T-cell (primary cell): ENCODE measurements at regions of chr5 and their contacts with region 1.

Region 1: GRCh38 chr5:66882592-66883227 is 286.5 kb downstream of the MAST4 start:
- DNase-seq: no peak
- ATAC-seq: no peak
- H3K4me3 ChIP-seq: no peak overlapping the region
- H3K4me3 Mint-ChIP-seq: no peak overlapping the region
- H3K27ac ChIP-seq: no peak overlapping the region
- H3K27ac Mint-ChIP-seq: no peak overlapping the region
- H3K4me1 ChIP-seq: no peaks in the 10 kb centered on the region
- H3K4me1 Mint-ChIP-seq: no peaks in the 10 kb centered on the region
- H3K27me3 ChIP-seq: no peaks in the 10 kb centered on the region
- H3K27me3 Mint-ChIP-seq: no peaks in the 10 kb centered on the region

Region 2: DNA sequence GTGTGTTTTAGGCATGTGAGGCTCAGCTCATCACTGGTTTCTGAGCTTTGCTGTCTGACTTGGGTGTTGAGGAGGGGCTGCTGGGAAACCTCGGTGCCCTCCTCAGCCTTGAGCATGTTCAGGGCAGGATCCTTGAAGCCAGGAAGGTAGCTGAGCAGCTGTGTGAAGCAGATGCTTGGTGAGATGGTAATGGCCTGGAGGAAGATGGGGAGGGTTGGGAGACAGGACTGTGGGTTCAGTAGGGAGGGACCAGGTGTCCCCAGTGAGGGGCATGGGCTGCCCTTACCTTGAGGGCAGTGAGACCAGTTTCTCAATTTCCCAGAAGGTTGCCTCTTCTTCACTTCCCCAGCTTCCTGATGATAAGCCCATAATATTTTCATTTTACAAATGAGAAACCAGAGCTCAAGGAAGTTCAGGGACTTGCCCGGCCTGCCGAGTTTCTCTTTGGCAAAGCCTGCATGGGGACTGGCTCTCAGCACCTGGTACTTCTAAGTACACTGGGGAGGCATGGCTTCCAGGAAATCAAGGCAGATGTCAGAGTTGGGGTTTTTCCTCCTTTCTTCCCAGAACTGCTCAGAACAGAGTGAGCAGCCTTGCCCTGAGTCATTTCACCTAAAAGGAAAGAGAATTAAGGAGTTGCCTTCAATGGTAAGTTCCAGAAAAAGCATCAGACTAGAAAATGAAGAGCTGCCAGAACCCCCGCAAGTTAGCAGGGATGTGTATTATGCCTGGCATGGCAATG is 60.9 kb before region 1 on chr5:
- CTCF ChIA-PET with region 1: no interaction called
- POLR2A ChIA-PET with region 1: no interaction called
- DNase-seq: peak in 1 of 35 experiments; percentile 6
- ATAC-seq: peak in 3 of 4 experiments; percentile 65 to 78 (median 70)
- H3K4me3 ChIP-seq: no peak overlapping the region
- H3K4me3 Mint-ChIP-seq: peak overlapping the region in 1 of 3 donors; percentile 43
- H3K27ac ChIP-seq: peak overlapping the region; percentile 27
- H3K27ac Mint-ChIP-seq: peak overlapping the region; percentile 56 to 84
- H3K4me1 ChIP-seq: peaks cover 4 to 11% of the 10 kb centered on the region in 2 experiments
- H3K4me1 Mint-ChIP-seq: peaks cover 19 to 27% (median 26%) of the 10 kb centered on the region in 3 donors
- H3K27me3 ChIP-seq: peaks cover 0 to 6% of the 10 kb centered on the region in 2 experiments
- H3K27me3 Mint-ChIP-seq: no peaks in the 10 kb centered on the region

Region 3: GRCh38 chr5:66856041-66856805 is 26.5 kb before region 1 on chr5:
- CTCF ChIA-PET with region 1: no interaction called
- POLR2A ChIA-PET with region 1: no interaction called
- DNase-seq: no peak
- ATAC-seq: no peak
- H3K4me3 ChIP-seq: no peak overlapping the region
- H3K4me3 Mint-ChIP-seq: no peak overlapping the region
- H3K27ac ChIP-seq: no peak overlapping the region
- H3K27ac Mint-ChIP-seq: no peak overlapping the region
- H3K4me1 ChIP-seq: no peaks in the 10 kb centered on the region
- H3K4me1 Mint-ChIP-seq: no peaks in the 10 kb centered on the region
- H3K27me3 ChIP-seq: peaks cover 0 to 4% of the 10 kb centered on the region in 2 experiments
- H3K27me3 Mint-ChIP-seq: peaks cover 8 to 13% of the 10 kb centered on the region in 2 donors

Region 4: GRCh38 chr5:67047160-67047559 is 164.4 kb after region 1 on chr5:
- CTCF ChIA-PET with region 1: interaction called in 1 of 2 experiments, 14 read pairs
- POLR2A ChIA-PET with region 1: interaction called in 1 of 2 experiments, 3 read pairs
- DNase-seq: no peak
- ATAC-seq: no peak
- H3K4me3 ChIP-seq: no peak overlapping the region
- H3K4me3 Mint-ChIP-seq: no peak overlapping the region
- H3K27ac ChIP-seq: no peak overlapping the region
- H3K27ac Mint-ChIP-seq: no peak overlapping the region
- H3K4me1 ChIP-seq: peaks cover 0 to 4% of the 10 kb centered on the region in 2 experiments
- H3K4me1 Mint-ChIP-seq: peaks cover 19 to 37% (median 19%) of the 10 kb centered on the region in 3 donors
- H3K27me3 ChIP-seq: no peaks in the 10 kb centered on the region
- H3K27me3 Mint-ChIP-seq: no peaks in the 10 kb centered on the region